Left colon (tissue), 2 donors: ENCODE measurements at regions of chr10 and their contacts with region 1.

Region 1: GRCh38 chr10:35635576-35635975 is 6.5 kb downstream of the FZD8 start:
- DNase-seq: peak in 1 of 2 donors; percentile 27
- ATAC-seq: peak; percentile 83

Region 2: GRCh38 chr10:35574924-35575352 is 60.6 kb before region 1 on chr10:
- intact Hi-C with region 1: no loop called
- DNase-seq: no peak
- ATAC-seq: no peak

Region 3: DNA sequence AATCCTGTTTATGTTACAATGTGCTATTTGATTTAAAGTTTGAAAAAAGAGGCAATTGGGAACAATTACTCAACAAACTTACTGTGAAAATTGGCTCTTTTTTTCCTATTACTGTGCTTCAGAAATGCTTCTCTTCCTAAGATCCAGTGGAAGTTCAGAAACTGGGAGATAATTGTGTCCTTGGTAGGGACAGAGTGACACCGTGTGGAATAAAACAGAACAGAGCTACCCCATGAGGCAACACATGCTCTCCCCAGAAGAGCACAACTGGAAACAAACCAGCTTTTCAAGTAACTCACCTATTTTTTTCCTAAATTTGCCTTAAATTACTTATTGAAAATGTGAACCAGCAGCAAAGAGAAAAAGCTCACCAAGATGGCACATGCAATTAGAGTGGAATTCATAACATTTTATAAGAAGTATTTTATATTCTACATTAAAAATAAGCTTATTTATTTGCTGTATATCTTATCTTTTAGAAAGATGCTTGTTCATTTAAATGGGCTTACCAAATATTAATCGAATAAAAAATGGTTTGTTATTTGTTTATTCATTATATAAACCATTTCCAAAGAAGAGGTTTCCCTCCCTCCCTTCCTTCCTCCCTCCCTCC is 1143.8 kb after region 1 on chr10:
- intact Hi-C with region 1: loop called in 1 of 2 experiments (anchors 5 kb)
- DNase-seq: no peak
- ATAC-seq: peak; percentile 49

Region 4: DNA sequence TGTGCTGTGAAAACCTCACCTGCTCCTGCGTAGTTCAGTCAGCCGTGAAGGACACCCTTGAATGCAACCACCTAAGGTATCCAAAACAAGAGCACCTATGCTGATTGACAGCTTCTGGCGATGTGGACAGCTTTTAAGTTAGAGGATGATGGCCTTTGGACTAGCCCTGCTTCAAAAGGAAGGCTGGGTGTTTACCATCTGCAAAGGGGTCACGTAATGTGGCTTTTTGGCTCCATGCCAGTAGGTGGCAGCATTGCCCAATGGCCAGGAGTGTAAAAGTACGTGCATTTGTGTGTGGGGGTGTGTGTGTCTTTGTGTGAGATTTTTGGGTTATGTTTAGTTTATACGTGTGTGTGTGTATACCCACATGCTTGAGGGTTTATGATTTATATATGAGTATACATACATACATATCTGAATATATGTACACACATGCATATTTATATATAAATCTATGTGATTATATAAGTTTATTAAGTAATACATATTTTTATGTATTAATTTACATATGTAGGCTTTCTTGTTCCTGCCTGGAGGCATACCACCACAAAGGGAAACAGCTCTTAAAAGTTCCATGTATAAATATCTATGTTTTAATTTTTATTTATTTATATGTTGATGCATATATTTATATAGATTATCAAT is 1253.5 kb after region 1 on chr10:
- intact Hi-C with region 1: loop called in 1 of 2 experiments (anchors 10 kb)
- DNase-seq: peak in 1 of 2 donors; percentile 20
- ATAC-seq: no peak